HEK293T (cell line): ENCODE measurements at regions of chr4 and their contacts with region 1.

Region 1: GRCh38 chr4:183840311-183840710 is 64.8 kb upstream of the STOX2 start:
- DNase-seq: peak; percentile 59

Region 2: GRCh38 chr4:183852910-183853547 is 12.7 kb after region 1 on chr4:
- CTCF ChIA-PET with region 1: no interaction called
- POLR2A ChIA-PET with region 1: no interaction called
- DNase-seq: no peak

Region 3: DNA sequence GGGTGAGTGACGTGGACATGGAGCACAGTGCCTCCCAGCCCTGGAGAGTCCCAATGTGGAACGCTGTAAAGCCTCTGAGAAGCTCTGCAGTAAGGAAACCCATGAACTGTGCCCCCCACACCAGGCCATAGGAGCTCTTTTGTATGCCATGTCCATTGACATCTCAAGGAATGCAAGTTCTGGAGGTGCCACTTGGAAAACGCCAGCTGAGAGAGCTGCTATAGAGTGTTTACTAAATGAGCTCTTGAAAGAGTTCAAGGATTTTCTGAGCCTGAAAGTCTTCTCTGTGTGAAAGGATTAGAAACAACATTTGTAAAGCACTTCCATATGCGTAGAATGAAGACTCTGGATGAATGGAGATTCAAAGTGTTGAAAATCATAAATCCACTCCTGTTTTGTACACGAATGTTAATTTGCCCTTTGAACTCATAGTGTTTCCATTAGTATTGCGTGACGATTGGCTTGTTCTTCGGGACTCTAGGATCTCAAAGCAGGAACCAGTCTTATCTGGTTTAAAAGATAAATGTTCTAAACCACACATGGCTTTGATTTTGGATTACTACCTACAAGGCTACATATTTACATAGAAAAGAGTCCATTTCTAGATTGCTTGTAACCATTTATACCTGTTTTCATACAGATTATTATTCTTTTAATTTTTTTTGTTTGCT is 23.0 kb after region 1 on chr4:
- CTCF ChIA-PET with region 1: no interaction called
- POLR2A ChIA-PET with region 1: no interaction called
- DNase-seq: no peak

Region 4: GRCh38 chr4:184100297-184100885 is 260.1 kb after region 1 on chr4:
- CTCF ChIA-PET with region 1: interaction called, 32 read pairs
- POLR2A ChIA-PET with region 1: interaction called, 5 read pairs
- DNase-seq: peak; percentile 64

Region 5: DNA sequence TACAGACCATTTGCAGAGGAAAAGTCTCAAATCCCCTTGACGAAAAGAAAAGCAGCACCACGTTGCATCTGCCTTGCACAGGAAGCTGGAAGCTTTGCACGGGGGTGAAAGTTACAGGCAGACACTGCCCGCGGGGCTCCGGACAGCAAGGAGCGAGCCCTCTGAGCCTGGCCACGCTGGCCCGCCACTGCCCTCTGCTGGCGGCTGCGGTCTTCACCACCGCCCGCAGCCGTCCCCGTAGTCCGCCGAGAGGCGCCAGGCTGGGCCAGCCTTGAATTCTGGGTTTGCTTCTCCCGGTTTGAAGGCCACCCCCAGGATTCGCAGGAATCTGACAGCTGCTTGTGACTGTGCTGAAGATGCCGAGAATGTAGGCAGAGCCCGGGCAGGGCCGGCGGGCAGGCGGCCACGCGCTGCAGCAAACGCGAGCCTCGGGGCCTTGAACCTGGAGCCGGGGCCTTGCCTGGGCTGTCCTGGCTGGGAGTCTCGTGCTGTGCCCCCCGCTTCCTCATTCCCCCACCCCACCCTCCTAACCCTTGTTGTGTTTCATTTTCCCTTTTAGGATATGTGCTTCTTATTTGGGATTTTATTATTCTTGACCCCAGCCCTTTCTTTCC is 328.2 kb after region 1 on chr4:
- CTCF ChIA-PET with region 1: interaction called, 14 read pairs
- POLR2A ChIA-PET with region 1: no interaction called
- DNase-seq: peak; percentile 70